Prostate gland (tissue), 2 donors: ENCODE measurements at regions of chr1 and their contacts with region 1.

Region 1: DNA sequence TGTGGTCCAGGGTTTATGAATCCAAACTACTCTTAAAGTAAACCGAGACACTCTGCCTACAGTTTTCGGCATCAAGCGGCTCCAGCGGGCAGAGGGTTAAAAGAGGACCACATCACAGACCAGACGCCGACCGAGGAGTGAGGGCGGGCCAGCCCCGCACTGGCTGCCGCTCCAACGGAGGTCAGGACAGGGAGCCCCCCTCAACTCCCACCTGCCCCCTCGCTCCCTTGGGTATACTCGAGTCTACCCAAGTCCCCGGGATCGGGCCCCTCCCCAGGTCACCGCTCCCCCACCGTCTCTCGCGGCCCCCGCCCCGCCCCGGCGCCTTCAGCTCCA is 312 bp downstream of the ARNT start:
- DNase-seq: no peak
- H3K4me3 ChIP-seq: peak overlapping the region; percentile 83 to 90
- H3K27ac ChIP-seq: peak overlapping the region; percentile 95 to 98
- H3K4me1 ChIP-seq: no peaks in the 10 kb centered on the region
- H3K27me3 ChIP-seq: no peaks in the 10 kb centered on the region
- CTCF ChIP-seq: no peak
- POLR2A ChIP-seq: no peak

Region 2: DNA sequence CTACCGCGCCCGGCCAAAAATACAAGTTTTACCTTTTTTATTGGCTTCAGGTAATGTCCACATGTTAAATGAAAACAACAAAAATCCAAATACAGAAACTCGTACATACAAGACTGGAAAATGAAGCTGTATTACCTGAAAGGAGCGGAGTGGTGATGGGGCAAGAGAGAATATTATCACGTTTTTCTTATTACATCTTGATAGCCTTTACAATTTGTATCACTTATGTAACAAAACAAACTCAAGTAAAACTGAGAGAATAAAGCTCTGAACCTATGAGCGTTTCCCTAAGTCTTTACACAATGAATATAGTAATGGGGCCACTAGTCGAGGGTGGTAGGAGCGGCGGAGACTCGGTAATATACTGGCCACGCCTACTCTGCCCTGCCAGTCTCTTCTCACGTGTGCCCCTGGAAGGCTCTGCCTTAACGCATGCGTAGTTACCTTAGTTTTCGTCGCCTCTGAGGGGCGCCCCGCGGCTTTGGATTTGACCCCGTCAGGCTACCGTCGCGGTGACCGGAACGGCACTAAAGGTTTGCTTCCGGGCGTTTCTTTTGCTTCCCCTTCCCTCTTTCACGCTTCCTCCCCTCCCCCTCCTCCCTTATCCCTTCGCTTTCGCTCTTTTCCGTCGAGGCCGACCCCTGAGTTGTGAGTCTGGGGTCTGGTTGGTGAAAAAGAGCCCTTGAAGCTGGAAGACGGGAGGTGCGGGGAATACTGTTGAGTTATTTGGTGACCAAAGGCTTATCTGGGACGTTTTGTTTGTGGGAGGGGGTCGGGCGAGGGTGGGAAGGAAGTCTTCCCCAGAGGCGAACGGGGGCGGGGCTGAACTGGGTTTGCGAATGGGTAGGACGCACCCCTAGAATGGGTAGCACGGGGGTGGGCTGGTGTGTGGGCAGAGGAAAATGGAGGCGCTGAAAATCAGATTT is 50.0 kb after region 1 on chr1 and contains the start of gene SETDB1:
- intact Hi-C with region 1: loop called (anchors 5 kb)
- DNase-seq: peak; percentile 92
- H3K4me3 ChIP-seq: peak within 1 kb of the TSS; percentile 79 to 89
- H3K27ac ChIP-seq: peak within 1 kb of the TSS; percentile 81 to 83
- H3K4me1 ChIP-seq: no peaks in the 10 kb centered on the region
- H3K27me3 ChIP-seq: no peaks in the 10 kb centered on the region
- CTCF ChIP-seq: peak in 3 of 4 experiments; percentile 15 to 24 (median 22)
- POLR2A ChIP-seq: peak; percentile 44
- total RNA-seq, gene SETDB1: 26.3 to 63.8 TPM

Region 3: GRCh38 chr1:150979092-150980056 is 103.3 kb after region 1 on chr1:
- intact Hi-C with region 1: loop called (anchors 10 kb)
- DNase-seq: peak; percentile 85
- H3K4me3 ChIP-seq: no peak overlapping the region
- H3K27ac ChIP-seq: peak overlapping the region in 1 of 2 donors; percentile 44
- H3K4me1 ChIP-seq: peaks cover 3% of the 10 kb centered on the region
- H3K27me3 ChIP-seq: no peaks in the 10 kb centered on the region
- CTCF ChIP-seq: peak; percentile 96 to 99 (median 96)
- POLR2A ChIP-seq: no peak

Region 4: GRCh38 chr1:150995896-150996295 is 119.8 kb after region 1 on chr1:
- intact Hi-C with region 1: no loop called
- DNase-seq: no peak
- H3K4me3 ChIP-seq: no peak overlapping the region
- H3K27ac ChIP-seq: peak overlapping the region in 1 of 2 donors; percentile 33
- H3K4me1 ChIP-seq: no peaks in the 10 kb centered on the region
- H3K27me3 ChIP-seq: no peaks in the 10 kb centered on the region
- CTCF ChIP-seq: peak; percentile 55 to 74 (median 67)
- POLR2A ChIP-seq: no peak